Activated CD4-positive, alpha-beta T cell treated with anti-CD3 and anti-CD28 coated beads for 36 hours (primary cell): ENCODE measurements at regions of chr15 and their contacts with region 1.

Region 1: DNA sequence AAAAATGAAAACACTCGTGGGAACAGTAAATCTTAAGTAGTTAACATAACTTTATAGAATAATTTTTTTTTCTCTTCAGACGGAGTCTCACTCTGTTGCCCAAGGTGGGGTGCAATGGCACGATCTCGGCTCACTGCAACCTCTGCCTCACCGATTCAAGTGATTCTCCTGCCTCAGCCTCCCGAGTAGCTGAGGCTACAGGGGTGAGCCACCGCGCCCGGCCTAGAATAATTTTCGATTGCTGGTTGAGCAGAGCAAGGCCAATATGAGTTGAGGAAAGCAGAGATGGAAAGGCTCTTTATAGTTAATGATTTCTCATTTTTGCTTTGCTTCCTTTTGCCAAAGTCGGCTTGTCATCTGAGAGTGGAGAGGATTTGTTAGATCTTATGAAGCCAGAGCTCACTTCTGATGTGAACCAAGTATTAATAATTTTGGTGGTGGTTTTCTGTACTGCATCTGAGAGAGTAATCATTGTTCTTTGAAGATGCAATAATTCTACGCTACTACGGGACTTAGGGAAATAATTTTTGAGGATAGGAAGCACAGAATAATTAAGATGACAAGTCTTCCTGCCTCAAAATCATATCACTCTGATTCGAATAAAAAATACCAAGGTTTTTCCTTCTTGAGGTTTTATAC is 1.6 kb upstream of the GOLM2 start:
- DNase-seq: no peak
- ATAC-seq: no peak
- H3K4me3 Mint-ChIP-seq: peak overlapping the region; percentile 90
- H3K27ac Mint-ChIP-seq: peak overlapping the region; percentile 97
- H3K4me1 Mint-ChIP-seq: peaks cover 32% of the 10 kb centered on the region
- H3K27me3 Mint-ChIP-seq: peaks cover 2% of the 10 kb centered on the region

Region 2: DNA sequence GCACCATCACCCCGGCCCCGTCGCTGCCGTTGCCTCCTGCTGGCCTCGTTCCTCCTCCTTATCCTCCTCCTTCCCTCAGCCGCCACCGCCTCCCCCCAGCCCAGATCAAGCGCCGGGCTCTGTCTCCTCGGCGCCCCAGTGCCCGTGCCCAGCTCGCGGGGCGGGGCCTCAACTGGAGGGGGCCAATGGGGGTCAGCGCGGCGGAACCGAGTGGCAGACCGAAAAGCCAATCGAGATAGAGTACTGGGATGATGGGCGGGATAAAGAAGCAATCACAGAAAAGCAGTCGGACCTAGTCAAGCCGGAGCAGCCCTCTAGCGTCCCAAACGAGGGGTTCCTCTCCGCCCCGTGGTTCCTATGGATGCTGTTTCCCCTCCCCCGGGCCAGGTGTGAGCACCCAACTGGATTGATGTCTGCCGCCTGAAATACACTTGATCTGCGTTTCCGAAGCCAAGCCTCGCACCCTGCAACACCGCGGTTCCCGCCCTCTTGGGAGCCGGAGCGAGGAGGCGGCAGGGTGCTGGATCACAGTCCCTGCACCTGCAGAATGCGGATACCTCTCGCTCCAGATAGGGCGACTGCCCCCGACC is 91.7 kb before region 1 on chr15 and contains the start of gene FRMD5:
- CTCF ChIA-PET with region 1: interaction called, 6 read pairs
- POLR2A ChIA-PET with region 1: no interaction called
- intact Hi-C with region 1: loop called in 1 of 2 experiments (anchors 5 kb)
- DNase-seq: peak; percentile 93
- ATAC-seq: peak; percentile 99
- H3K4me3 Mint-ChIP-seq: peak within 1 kb of the TSS; percentile 75
- H3K27ac Mint-ChIP-seq: no peak within 1 kb of the TSS
- H3K4me1 Mint-ChIP-seq: peaks cover 16% of the 10 kb centered on the region
- H3K27me3 Mint-ChIP-seq: peaks cover 49% of the 10 kb centered on the region
- total RNA-seq, gene FRMD5: 0.16 to 0.30 TPM

Region 3: GRCh38 chr15:44501768-44502366 is 214.9 kb after region 1 on chr15:
- CTCF ChIA-PET with region 1: interaction called, 4 read pairs
- POLR2A ChIA-PET with region 1: no interaction called
- intact Hi-C with region 1: loop called in 1 of 2 experiments (anchors 2 kb)
- DNase-seq: no peak
- ATAC-seq: peak; percentile 48
- H3K4me3 Mint-ChIP-seq: no peak overlapping the region
- H3K27ac Mint-ChIP-seq: no peak overlapping the region
- H3K4me1 Mint-ChIP-seq: peaks cover 22% of the 10 kb centered on the region
- H3K27me3 Mint-ChIP-seq: no peaks in the 10 kb centered on the region

Region 4: DNA sequence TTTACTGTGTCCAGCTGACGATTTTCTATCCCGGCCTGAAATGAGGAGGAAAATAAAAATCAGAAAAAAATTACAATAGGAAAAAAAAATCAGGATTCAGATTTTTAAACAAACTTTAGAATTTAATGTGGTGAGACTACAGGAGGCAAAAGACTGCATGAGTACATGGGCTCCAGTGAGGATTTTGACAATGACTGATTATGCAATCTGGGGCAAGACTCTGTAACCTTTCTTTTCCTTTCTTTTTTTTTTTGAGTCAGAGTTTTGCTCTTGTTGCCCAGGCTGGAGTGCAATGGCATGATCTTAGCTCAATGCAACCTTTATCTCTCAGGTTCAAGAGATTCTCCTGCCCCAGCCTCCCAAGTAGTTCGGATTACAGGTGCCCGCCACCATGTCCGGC is 346.7 kb after region 1 on chr15:
- CTCF ChIA-PET with region 1: no interaction called
- POLR2A ChIA-PET with region 1: no interaction called
- intact Hi-C with region 1: loop called in 1 of 2 experiments (anchors 10 kb)
- DNase-seq: peak; percentile 13
- ATAC-seq: peak; percentile 77
- H3K4me3 Mint-ChIP-seq: peak overlapping the region; percentile 65
- H3K27ac Mint-ChIP-seq: peak overlapping the region; percentile 98
- H3K4me1 Mint-ChIP-seq: peaks cover 26% of the 10 kb centered on the region
- H3K27me3 Mint-ChIP-seq: no peaks in the 10 kb centered on the region

Region 5: DNA sequence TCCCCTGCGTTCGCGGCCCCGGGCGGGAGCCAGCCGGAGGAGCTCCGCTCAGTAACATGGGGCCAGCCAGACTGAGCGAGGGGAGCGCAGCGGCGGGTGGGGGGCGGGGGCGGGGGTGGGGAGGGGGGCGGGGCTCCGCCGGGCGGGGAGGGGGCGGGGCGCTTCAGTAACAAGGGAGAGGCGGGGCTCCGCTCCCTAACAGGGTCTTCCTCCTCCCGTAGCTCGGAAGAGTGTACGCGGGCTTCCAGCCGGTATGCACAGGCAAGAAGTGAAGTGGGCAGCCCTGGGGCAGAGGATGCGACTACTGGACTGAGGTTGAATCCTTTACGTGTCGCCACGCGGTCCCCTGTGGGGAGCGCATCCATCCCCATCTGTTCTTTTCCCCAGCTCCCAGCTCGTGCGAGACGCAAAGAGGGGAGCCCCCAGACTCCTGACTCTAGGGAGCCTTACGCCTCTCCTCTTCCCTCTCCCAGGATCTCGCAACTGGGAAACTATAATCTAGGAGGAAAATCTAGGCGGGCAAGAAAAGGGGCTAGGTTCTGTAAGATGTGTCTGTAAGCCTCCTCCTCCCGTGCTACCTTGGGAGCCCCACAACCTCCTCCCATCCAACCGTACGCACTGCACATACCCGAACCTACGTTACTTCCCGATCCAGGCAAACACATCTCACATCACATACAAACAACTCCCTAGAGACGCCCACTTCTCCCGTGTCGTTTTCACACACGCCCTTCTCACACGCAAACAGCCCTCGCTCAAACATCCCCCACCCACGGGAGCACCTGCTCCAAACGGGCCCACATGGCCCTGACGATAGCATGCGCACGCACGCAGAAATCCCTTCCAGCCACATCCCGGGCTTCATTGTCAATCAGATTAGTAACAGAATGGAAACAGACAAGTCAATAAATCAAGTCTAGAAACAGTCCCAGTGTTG is 901.2 kb after region 1 on chr15 and contains the start of gene SHF:
- CTCF ChIA-PET with region 1: no interaction called
- POLR2A ChIA-PET with region 1: no interaction called
- intact Hi-C with region 1: loop called in 1 of 2 experiments (anchors 10 kb)
- DNase-seq: peak; percentile 90
- ATAC-seq: peak; percentile 82
- H3K4me3 Mint-ChIP-seq: peak within 1 kb of the TSS; percentile 85
- H3K27ac Mint-ChIP-seq: peak within 1 kb of the TSS; percentile 98
- H3K4me1 Mint-ChIP-seq: peaks cover 28% of the 10 kb centered on the region
- H3K27me3 Mint-ChIP-seq: no peaks in the 10 kb centered on the region
- total RNA-seq, gene SHF: 17.9 to 18.7 TPM